Pancreas (tissue), 10 donors: ENCODE measurements at regions of chr16 and their contacts with region 1.

Region 1: DNA sequence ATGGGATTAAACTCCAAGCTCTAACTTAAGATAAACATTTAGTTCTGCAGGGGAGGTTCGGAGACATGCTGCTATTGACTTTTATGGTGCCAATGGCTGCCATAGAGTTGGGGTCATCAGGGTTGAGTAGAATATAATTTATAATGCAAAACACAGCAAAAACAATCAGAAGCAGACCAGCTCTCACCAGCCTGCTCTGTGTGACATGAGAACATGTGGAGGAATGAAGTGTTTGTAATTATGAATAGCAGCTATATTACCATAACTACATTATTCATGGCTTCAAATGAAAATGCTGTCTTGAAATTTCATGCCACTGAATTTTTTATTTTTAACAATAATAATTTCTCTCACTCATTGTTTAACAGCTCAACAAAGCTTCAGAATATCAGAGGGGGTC is 645.6 kb upstream of the CDH8 start:
- DNase-seq: no peak
- ATAC-seq: no peak
- H3K4me3 ChIP-seq: no peak overlapping the region
- H3K27ac ChIP-seq: no peak overlapping the region
- H3K4me1 ChIP-seq: no peaks in the 10 kb centered on the region
- H3K27me3 ChIP-seq: no peaks in the 10 kb centered on the region
- CTCF ChIP-seq: no peak

Region 2: GRCh38 chr16:62408760-62409159 is 273.1 kb before region 1 on chr16:
- intact Hi-C with region 1: loop called in 1 of 3 experiments (anchors 5 kb)
- DNase-seq: peak in 1 of 6 donors; percentile 21
- ATAC-seq: no peak
- H3K4me3 ChIP-seq: no peak overlapping the region
- H3K27ac ChIP-seq: no peak overlapping the region
- H3K4me1 ChIP-seq: no peaks in the 10 kb centered on the region
- H3K27me3 ChIP-seq: no peaks in the 10 kb centered on the region
- CTCF ChIP-seq: no peak

Region 3: GRCh38 chr16:62732092-62732491 is 50.3 kb after region 1 on chr16:
- intact Hi-C with region 1: no loop called
- DNase-seq: no peak
- ATAC-seq: no peak
- H3K4me3 ChIP-seq: no peak overlapping the region
- H3K27ac ChIP-seq: no peak overlapping the region
- H3K4me1 ChIP-seq: no peaks in the 10 kb centered on the region
- H3K27me3 ChIP-seq: peaks cover 0 to 5% (median 0%) of the 10 kb centered on the region in 4 donors
- CTCF ChIP-seq: no peak

Region 4: DNA sequence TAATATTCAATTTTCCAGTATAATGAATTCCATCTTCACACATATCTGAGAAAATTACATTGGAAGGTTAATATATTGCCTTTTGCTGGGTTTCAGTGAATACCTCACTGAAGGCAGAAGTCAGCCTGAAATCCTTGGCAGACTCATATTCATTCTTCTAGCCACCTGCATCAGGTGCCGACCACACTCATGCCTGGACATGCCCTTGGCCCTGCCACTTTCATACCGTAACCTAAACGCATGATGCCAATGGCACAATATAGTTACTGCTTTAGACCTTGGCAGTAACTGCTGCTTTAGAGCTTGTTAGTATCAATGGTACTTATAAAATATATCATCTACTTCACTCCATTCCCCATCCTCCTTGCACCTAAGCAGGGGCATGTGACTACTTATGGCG is 172.1 kb after region 1 on chr16:
- intact Hi-C with region 1: no loop called
- DNase-seq: no peak
- ATAC-seq: no peak
- H3K4me3 ChIP-seq: no peak overlapping the region
- H3K27ac ChIP-seq: no peak overlapping the region
- H3K4me1 ChIP-seq: no peaks in the 10 kb centered on the region
- H3K27me3 ChIP-seq: no peaks in the 10 kb centered on the region
- CTCF ChIP-seq: no peak